Dorsolateral prefrontal cortex (tissue), 120 donors: ENCODE measurements at regions of chr12 and their contacts with region 1.

Region 1: GRCh38 chr12:25689996-25690501 is 137.0 kb upstream of the LMNTD1 start:
- DNase-seq: no peak
- H3K4me3 ChIP-seq: no peak overlapping the region
- H3K27ac ChIP-seq: no peak overlapping the region
- H3K27me3 ChIP-seq: no peaks in the 10 kb centered on the region
- CTCF ChIP-seq: no peak

Region 2: GRCh38 chr12:23771240-23771949 is 1918.7 kb before region 1 on chr12:
- intact Hi-C with region 1: loop called in 1 of 2 experiments (anchors 10 kb)
- DNase-seq: peak; percentile 23 to 87 (median 72)
- H3K4me3 ChIP-seq: peak overlapping the region in 16 of 59 donors; percentile 1 to 45 (median 13)
- H3K27ac ChIP-seq: peak overlapping the region in 27 of 59 donors; percentile 2 to 81 (median 31)
- H3K27me3 ChIP-seq: no peaks in the 10 kb centered on the region
- CTCF ChIP-seq: peak in 1 of 56 donors; percentile 8